ENCODE measurements at regions of chr19 and their contacts with region 1.

Region 1: GRCh38 chr19:8321060-8321985 is at the starts of genes NDUFA7 and RPS28:
- DNase-seq: peak; percentile 94 to 97 (median 96)
- ATAC-seq: peak; percentile 98
- H3K4me3 ChIP-seq: peak within 1 kb of the TSS; percentile 98
- H3K4me3 Mint-ChIP-seq: peak within 1 kb of the TSS; percentile 90 to 99 (median 98)
- H3K27ac ChIP-seq: peak within 1 kb of the TSS; percentile 96
- H3K27ac Mint-ChIP-seq: peak within 1 kb of the TSS; percentile 94 to 99 (median 98)
- H3K4me1 ChIP-seq: peaks cover 25% of the 10 kb centered on the region in 2 donors
- H3K4me1 Mint-ChIP-seq: peaks cover 16 to 44% (median 29%) of the 10 kb centered on the region in 7 donors
- H3K27me3 ChIP-seq: no peaks in the 10 kb centered on the region
- H3K27me3 Mint-ChIP-seq: no peaks in the 10 kb centered on the region
- total RNA-seq, gene NDUFA7: 16.8 to 50.3 (median 30.0) TPM
- total RNA-seq, gene RPS28: 2,319 to 4,111 (median 3,327) TPM

Region 2: DNA sequence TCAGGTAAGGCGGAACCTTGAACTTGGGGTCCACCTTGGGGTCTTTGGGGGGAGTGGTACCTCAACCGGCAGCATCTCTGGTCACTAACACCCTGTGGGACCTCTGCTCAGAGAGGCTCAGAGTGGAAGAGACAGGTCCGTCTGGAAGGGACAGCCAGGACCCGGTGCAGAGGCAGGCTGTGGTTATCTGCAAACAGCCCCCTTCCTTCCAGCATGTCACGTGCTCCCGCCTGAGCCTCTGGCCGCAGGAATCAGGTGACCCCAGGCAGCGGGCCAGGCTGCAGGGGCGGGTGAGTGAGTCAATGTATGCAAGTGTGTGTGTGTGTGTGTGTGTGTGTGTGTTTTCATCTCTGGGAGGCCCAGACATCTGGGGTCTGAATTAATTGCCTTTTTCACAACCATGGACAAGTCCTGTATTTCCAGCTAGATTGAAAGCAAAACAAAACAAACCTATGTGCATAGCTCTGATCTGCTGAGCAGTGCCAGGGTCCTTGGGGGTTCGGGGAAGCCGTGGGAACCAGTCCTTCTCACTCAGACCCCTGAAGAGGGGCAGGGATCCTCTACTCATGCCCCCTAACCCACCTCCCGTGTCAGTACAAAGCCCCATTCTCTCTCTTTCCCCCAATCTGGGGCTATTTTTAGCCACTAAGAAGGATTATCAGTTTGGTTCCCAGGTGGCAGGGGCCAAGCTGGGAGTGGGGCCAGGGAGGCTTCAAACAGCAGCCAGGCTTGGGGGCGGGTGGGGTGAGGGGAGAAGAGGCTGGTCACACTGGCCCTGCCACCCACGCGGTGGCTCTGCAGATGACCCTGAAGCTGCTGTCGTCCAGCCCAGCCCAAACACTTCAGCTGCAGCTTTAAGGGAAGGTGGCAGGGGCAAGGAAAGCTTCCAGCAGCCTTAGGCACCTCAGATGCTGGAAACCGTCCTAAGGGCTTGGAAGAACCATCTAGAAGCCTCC is 80.8 kb before region 1 on chr19:
- CTCF ChIA-PET with region 1: no interaction called
- POLR2A ChIA-PET with region 1: no interaction called
- intact Hi-C with region 1: no loop called
- DNase-seq: peak in 1 of 9 donors; percentile 20
- ATAC-seq: peak; percentile 87
- H3K4me3 ChIP-seq: no peak overlapping the region
- H3K4me3 Mint-ChIP-seq: peak overlapping the region in 3 of 10 donors; percentile 4 to 60 (median 22)
- H3K27ac ChIP-seq: no peak overlapping the region
- H3K27ac Mint-ChIP-seq: peak overlapping the region in 5 of 9 donors; percentile 25 to 69 (median 55)
- H3K4me1 ChIP-seq: peaks cover 8 to 15% of the 10 kb centered on the region in 2 donors
- H3K4me1 Mint-ChIP-seq: peaks cover 9 to 35% (median 16%) of the 10 kb centered on the region in 7 donors
- H3K27me3 ChIP-seq: no peaks in the 10 kb centered on the region
- H3K27me3 Mint-ChIP-seq: no peaks in the 10 kb centered on the region

Region 3: DNA sequence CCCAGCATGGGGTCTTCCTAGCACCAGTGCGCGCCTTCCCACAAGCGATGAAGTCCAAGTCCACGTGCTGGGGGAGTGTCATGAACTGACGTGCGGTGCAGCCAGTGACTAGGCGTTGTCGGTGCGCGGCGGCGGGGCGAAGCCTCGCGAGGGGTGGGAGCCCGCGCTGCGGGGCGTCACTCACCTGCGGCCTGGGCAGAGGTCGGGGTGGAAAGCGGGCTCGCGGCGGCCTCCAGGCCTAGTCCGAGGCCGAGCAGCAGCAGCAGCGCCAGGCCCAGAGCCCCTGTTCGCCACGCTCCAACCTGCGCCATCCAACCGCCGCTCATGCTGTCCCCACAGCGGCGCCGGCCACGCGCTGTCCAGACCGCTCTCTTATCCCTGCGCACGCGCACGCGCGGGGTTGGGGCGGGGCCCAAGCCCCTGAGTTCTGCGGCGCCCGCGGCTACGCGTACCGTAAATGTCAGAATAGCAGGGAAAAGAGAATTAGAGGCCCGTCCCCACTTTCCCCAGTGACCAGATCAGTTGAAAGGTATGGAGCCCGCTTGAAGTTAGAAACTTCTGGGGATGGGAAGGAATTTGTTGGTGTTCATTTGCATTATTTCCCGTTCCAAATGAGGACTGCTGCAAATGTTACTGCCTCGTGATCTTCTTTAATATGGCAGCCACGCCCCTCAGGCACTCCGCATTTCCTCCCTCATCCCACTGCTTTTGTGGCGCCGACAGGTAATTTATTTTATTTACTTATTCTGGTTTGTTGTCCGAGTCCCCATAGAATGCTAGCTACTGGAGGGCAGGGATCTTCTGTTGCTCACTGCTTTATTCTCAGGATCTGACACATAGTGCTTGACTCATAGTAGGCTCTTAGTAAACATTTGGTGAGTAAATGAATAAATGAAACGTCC is 13.1 kb before region 1 on chr19 and contains the start of gene CD320:
- CTCF ChIA-PET with region 1: interaction called, 5 read pairs
- POLR2A ChIA-PET with region 1: interaction called, 31 read pairs
- intact Hi-C with region 1: loop called (anchors 1 kb)
- DNase-seq: peak; percentile 84 to 90 (median 89)
- ATAC-seq: peak; percentile 95
- H3K4me3 ChIP-seq: peak within 1 kb of the TSS; percentile 83
- H3K4me3 Mint-ChIP-seq: peak within 1 kb of the TSS; percentile 90 to 97 (median 92)
- H3K27ac ChIP-seq: peak within 1 kb of the TSS; percentile 89
- H3K27ac Mint-ChIP-seq: peak within 1 kb of the TSS; percentile 79 to 98 (median 94)
- H3K4me1 ChIP-seq: peaks cover 20 to 22% of the 10 kb centered on the region in 2 donors
- H3K4me1 Mint-ChIP-seq: peaks cover 18 to 38% (median 35%) of the 10 kb centered on the region in 7 donors
- H3K27me3 ChIP-seq: no peaks in the 10 kb centered on the region
- H3K27me3 Mint-ChIP-seq: no peaks in the 10 kb centered on the region
- total RNA-seq, gene CD320: 20.5 to 52.0 (median 27.2) TPM